Mammary epithelial cell (primary cell): ENCODE measurements at regions of chr3 and their contacts with region 1.

Region 1: GRCh38 chr3:129723558-129724324 is 117.3 kb upstream of the PLXND1 start:
- DNase-seq: peak; percentile 89
- H3K4me3 ChIP-seq: peak overlapping the region; percentile 22 to 46 (median 33)
- H3K27ac ChIP-seq: peak overlapping the region; percentile 89
- H3K4me1 ChIP-seq: peaks cover 21% of the 10 kb centered on the region
- H3K27me3 ChIP-seq: no peaks in the 10 kb centered on the region
- CTCF ChIP-seq: no peak

Region 2: GRCh38 chr3:129633751-129634392 is 89.9 kb before region 1 on chr3:
- CTCF ChIA-PET with region 1: interaction called, 11 read pairs
- dilution Hi-C with region 1: no loop called
- in situ Hi-C with region 1: no loop called
- intact Hi-C with region 1: no loop called
- DNase-seq: no peak
- H3K4me3 ChIP-seq: no peak overlapping the region
- H3K27ac ChIP-seq: no peak overlapping the region
- H3K4me1 ChIP-seq: no peaks in the 10 kb centered on the region
- H3K27me3 ChIP-seq: no peaks in the 10 kb centered on the region
- CTCF ChIP-seq: no peak

Region 3: DNA sequence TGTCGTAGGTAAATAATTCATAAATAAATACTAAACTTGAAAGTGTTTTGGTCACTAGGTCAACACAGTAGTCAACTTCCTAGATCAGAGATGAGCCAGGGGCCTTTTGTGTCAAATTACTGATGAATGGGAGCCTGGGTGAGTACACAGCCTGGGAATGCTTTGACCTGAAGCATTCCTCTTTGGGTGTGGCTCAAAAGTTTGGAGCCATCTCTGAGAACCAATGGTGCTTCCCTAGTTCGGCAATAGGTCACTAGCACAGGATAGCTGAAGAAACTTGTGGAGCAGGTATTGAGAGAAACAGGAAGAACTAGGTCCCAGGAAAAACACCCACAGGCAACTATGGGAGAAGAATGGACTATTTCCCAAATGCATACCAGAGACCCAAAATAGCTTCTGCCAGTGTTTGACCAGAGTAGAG is 60.7 kb before region 1 on chr3:
- CTCF ChIA-PET with region 1: no interaction called
- dilution Hi-C with region 1: no loop called
- in situ Hi-C with region 1: no loop called
- intact Hi-C with region 1: loop called (anchors 2 kb)
- DNase-seq: peak; percentile 91
- H3K4me3 ChIP-seq: no peak overlapping the region
- H3K27ac ChIP-seq: peak overlapping the region; percentile 94
- H3K4me1 ChIP-seq: peaks cover 49% of the 10 kb centered on the region
- H3K27me3 ChIP-seq: no peaks in the 10 kb centered on the region
- CTCF ChIP-seq: no peak

Region 4: DNA sequence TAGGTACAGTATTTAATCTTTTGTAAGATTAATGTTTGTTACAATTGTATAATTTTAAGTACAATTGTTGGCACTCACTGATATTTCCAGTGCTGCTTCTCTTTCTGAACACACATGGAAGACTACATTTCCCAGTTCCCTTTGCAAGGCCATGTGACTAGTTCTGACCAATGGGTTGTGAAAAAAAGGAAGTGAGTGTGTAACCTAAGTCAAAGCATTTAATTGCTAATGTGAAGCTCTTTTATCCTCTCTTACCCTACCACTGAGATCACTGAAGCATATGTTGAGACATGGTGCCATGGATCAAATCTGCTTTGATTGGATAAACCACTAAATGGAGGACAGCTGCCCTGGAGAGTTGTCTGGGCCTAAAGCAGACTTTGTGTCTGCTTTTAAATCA is 33.3 kb before region 1 on chr3:
- CTCF ChIA-PET with region 1: no interaction called
- dilution Hi-C with region 1: no loop called
- in situ Hi-C with region 1: no loop called
- intact Hi-C with region 1: loop called (anchors 1 kb)
- DNase-seq: peak; percentile 65
- H3K4me3 ChIP-seq: no peak overlapping the region
- H3K27ac ChIP-seq: no peak overlapping the region
- H3K4me1 ChIP-seq: peaks cover 21% of the 10 kb centered on the region
- H3K27me3 ChIP-seq: no peaks in the 10 kb centered on the region
- CTCF ChIP-seq: no peak

Region 5: GRCh38 chr3:129845956-129846355 is 122.2 kb after region 1 on chr3:
- CTCF ChIA-PET with region 1: no interaction called
- dilution Hi-C with region 1: no loop called
- in situ Hi-C with region 1: no loop called
- intact Hi-C with region 1: no loop called
- DNase-seq: no peak
- H3K4me3 ChIP-seq: no peak overlapping the region
- H3K27ac ChIP-seq: no peak overlapping the region
- H3K4me1 ChIP-seq: peaks cover 6% of the 10 kb centered on the region
- H3K27me3 ChIP-seq: no peaks in the 10 kb centered on the region
- CTCF ChIP-seq: no peak